Activated CD8-positive, alpha-beta T cell treated with anti-CD3 and anti-CD28 coated beads, Interleukin-2, amount 10 ng/mL, durations not matched to agents 7 days and 5 days (primary cell): ENCODE measurements at regions of chr1 and their contacts with region 1.

Region 1: DNA sequence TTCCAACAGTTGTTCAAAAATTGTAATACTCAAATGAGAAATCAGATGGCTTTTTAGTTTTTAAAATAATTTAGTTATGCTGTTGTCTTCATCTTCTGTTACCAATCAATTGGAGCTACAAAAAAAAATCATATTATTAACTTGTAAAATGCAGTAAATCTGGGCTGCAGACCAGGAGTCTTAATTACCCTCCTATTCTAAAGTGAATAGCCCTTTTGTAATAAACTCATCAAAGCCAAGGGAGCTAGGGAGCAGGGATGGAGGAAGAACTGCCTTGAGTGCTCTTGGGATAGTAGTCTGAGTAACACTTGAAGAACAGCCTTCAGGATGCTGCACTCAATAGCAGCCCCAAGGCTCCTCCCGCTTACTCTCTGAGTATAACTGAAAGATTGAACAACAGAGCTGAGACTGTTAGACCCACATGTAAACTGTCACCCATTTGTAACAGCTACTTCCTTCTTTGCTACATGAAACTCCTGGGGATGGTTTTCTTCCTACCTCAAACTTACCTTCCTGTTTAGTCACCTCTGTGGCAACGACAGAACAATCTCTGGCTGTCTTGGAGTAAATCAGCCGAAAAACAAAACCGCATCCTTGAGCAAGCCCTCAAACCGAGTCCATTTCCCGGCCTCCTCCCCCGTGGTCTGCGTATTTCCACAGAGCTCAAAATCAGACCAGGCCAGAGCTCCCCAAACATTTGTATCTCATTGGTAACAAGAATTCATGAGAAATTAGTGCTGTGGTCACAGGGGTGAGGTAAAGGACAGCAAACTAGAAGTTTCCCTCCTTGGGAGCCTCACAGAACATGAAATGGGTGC is 55.9 kb downstream of the CD58 start:
- DNase-seq: peak; percentile 76
- ATAC-seq: peak; percentile 84
- H3K4me3 Mint-ChIP-seq: peak overlapping the region; percentile 57
- H3K27ac Mint-ChIP-seq: peak overlapping the region; percentile 89
- H3K4me1 Mint-ChIP-seq: peaks cover 78% of the 10 kb centered on the region
- H3K27me3 Mint-ChIP-seq: no peaks in the 10 kb centered on the region

Region 2: DNA sequence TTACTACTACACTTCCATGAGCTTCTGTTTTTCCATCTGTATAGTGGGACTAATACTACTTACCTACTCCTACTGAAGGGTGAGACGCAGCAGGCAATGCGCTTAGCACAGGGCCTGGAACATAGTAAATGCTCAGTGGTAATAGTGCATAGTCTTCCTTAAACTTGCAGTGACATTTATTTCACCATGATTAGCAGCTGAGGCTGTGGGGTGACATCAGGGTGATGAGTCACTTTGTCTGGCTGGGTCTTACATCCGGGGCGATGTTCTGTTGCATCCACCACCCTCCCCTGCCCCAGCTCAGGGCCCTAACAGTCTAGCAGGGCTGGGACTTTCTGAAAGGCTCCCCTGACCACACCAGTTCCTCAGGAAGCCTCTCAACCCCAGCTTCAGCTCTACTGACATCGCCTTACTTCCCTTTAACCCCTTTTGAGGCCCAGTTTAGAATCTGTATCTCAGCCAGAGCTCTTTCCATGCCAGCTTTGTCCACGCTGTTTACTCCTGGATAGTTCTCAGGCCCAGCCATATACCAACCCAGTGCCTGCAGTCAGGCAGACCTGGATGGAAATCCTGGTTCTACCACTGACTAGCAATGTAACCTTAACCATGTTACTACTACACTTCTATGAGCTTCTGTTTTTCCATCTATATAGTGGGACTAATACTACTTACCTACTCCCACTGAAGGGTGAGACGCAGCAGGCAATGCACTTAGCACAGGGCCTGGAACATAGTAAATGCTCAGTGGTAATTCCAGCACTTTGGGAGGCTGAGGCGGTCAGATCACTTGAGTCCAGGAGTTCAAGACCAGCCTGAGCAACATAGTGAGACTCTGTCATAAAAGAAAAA is 10.4 kb before region 1 on chr1:
- CTCF ChIA-PET with region 1: interaction called, 61 read pairs
- POLR2A ChIA-PET with region 1: interaction called, 23 read pairs
- DNase-seq: peak; percentile 94
- ATAC-seq: peak; percentile 95
- H3K4me3 Mint-ChIP-seq: peak overlapping the region; percentile 45
- H3K27ac Mint-ChIP-seq: peak overlapping the region; percentile 90
- H3K4me1 Mint-ChIP-seq: peaks cover 82% of the 10 kb centered on the region
- H3K27me3 Mint-ChIP-seq: no peaks in the 10 kb centered on the region